PC-3 (cell line): ENCODE measurements at regions of chr5 and their contacts with region 1.

Region 1: GRCh38 chr5:142221091-142221860 is 103.5 kb downstream of the SPRY4 start:
- DNase-seq: peak; percentile 28
- ATAC-seq: peak; percentile 55
- H3K4me3 ChIP-seq: no peak overlapping the region
- H3K27ac ChIP-seq: peak overlapping the region; percentile 43
- H3K4me1 ChIP-seq: peaks cover 41% of the 10 kb centered on the region
- H3K27me3 ChIP-seq: no peaks in the 10 kb centered on the region
- CTCF ChIP-seq: no peak

Region 2: DNA sequence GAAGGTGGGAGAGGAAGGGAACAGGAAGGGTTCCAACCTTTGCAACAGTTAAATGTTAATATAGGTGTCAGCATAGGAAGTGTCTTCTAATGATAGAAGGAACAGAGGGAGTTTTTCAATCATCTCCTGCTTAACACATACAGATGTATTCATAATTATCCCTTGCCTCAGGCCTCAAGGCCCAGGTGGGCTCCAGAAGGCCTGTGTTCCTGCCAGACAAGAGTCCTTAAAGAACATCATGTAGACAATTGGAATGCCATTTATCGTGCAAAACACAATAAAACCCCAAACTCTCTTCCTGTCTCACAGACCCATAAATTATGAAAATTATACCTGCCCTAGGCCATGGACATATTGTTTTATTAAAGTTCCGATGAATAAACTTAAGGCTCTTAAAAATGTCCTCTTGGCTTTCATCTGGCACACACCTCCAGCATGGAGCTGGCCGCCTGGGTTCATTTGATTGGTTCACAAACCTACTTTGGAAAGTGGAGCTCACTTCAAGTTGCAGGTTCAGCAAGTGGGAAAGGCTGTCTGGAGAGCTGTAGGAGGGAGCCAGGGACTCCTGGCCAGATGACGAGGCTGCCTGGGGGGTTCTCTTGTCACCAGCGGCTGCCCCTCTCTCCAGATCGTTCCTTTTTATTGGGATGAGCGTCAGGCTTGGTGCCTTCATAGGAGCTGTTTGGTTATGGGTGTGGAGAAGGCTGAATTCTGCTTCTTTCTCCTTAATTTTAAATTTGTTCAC is 86.0 kb after region 1 on chr5:
- CTCF ChIA-PET with region 1: no interaction called
- POLR2A ChIA-PET with region 1: no interaction called
- intact Hi-C with region 1: loop called (anchors 1 kb)
- DNase-seq: no peak
- ATAC-seq: peak; percentile 6
- H3K4me3 ChIP-seq: no peak overlapping the region
- H3K27ac ChIP-seq: 0 out of 2 replicates have a peak overlapping the region, but pooled peaks have one; percentile 9
- H3K4me1 ChIP-seq: no peaks in the 10 kb centered on the region
- H3K27me3 ChIP-seq: no peaks in the 10 kb centered on the region
- CTCF ChIP-seq: no peak